CD8-positive, alpha-beta T cell (primary cell): ENCODE measurements at regions of chr3 and their contacts with region 1.

Region 1: DNA sequence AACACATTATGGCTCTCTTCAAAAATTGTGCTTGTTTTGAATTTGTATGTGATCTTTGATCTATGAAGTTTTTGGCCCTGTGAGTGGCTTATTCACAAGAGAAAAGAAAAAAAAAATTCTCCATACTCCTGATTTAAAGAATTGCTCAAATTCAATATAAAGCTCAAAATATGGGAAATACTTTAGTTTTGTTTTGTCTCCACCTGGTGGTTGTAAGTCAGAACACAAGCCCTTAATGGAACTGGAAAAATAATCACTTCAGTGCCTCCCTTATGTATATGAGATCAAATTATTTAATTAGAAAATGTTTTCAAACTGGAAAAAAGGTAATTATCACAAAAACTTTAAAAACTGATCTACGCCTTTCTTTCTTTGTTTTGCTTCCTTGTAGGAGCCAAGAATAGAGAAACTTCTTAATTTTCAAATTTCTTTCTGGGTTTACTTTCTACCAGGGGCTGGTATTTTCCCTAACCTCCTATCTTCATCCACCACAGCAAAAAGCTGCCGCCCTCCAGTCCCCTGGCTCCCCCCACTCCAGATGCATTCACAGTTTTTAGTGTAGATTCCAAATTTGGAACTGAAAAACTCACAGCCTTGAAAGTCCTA is 50.6 kb downstream of the SERP1 start:
- DNase-seq: peak in 3 of 9 experiments; percentile 23 to 70 (median 62)
- ATAC-seq: peak; percentile 52
- H3K4me3 ChIP-seq: no peak overlapping the region
- H3K4me3 Mint-ChIP-seq: no peak overlapping the region
- H3K27ac ChIP-seq: no peak overlapping the region
- H3K27ac Mint-ChIP-seq: no peak overlapping the region
- H3K4me1 ChIP-seq: no peaks in the 10 kb centered on the region
- H3K4me1 Mint-ChIP-seq: no peaks in the 10 kb centered on the region
- H3K27me3 ChIP-seq: no peaks in the 10 kb centered on the region
- H3K27me3 Mint-ChIP-seq: no peaks in the 10 kb centered on the region
- CTCF ChIP-seq: peak; percentile 81

Region 2: DNA sequence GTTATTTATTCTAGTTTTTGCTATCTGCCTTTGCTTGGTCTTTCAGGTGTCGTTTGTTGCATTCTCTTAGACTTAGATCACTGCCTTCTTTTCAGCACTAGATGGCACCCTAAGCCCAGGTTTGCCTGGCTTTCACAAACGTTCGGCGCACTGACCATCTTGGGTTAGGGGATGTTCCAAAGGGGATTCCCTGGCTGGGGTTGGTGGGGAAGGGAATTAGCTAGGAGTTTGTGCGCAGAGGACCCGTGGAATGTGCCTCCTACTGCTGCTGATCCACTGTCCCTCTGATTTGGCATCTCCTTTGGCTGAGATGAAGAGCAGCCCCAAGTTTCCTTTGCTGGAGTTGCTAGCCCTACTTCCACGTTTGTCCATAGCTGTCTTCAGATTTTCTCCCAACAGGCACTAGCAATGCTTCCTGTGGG is 558.8 kb before region 1 on chr3:
- CTCF ChIA-PET with region 1: no interaction called
- POLR2A ChIA-PET with region 1: no interaction called
- intact Hi-C with region 1: loop called (anchors 1 to 2 kb)
- DNase-seq: peak; percentile 7 to 64 (median 32)
- ATAC-seq: peak; percentile 46
- H3K4me3 ChIP-seq: no peak overlapping the region
- H3K4me3 Mint-ChIP-seq: no peak overlapping the region
- H3K27ac ChIP-seq: no peak overlapping the region
- H3K27ac Mint-ChIP-seq: no peak overlapping the region
- H3K4me1 ChIP-seq: no peaks in the 10 kb centered on the region
- H3K4me1 Mint-ChIP-seq: peaks cover 24% of the 10 kb centered on the region
- H3K27me3 ChIP-seq: no peaks in the 10 kb centered on the region
- H3K27me3 Mint-ChIP-seq: no peaks in the 10 kb centered on the region
- CTCF ChIP-seq: peak; percentile 65

Region 3: GRCh38 chr3:150220799-150221198 is 274.9 kb before region 1 on chr3:
- CTCF ChIA-PET with region 1: interaction called, 5 read pairs
- POLR2A ChIA-PET with region 1: no interaction called
- intact Hi-C with region 1: loop called (anchors 2 to 5 kb)
- DNase-seq: no peak
- ATAC-seq: no peak
- H3K4me3 ChIP-seq: no peak overlapping the region
- H3K4me3 Mint-ChIP-seq: no peak overlapping the region
- H3K27ac ChIP-seq: no peak overlapping the region
- H3K27ac Mint-ChIP-seq: no peak overlapping the region
- H3K4me1 ChIP-seq: peaks cover 5% of the 10 kb centered on the region
- H3K4me1 Mint-ChIP-seq: peaks cover 6% of the 10 kb centered on the region
- H3K27me3 ChIP-seq: peaks cover 5 to 10% of the 10 kb centered on the region in 2 experiments
- H3K27me3 Mint-ChIP-seq: peaks cover 45% of the 10 kb centered on the region
- CTCF ChIP-seq: no peak

Region 4: GRCh38 chr3:150286390-150287147 is 209.1 kb before region 1 on chr3:
- CTCF ChIA-PET with region 1: interaction called, 40 read pairs
- POLR2A ChIA-PET with region 1: interaction called, 3 read pairs
- intact Hi-C with region 1: loop called (anchors 1 kb)
- DNase-seq: peak in 4 of 9 experiments; percentile 8 to 68 (median 34)
- ATAC-seq: peak; percentile 83
- H3K4me3 ChIP-seq: no peak overlapping the region
- H3K4me3 Mint-ChIP-seq: no peak overlapping the region
- H3K27ac ChIP-seq: no peak overlapping the region
- H3K27ac Mint-ChIP-seq: no peak overlapping the region
- H3K4me1 ChIP-seq: no peaks in the 10 kb centered on the region
- H3K4me1 Mint-ChIP-seq: no peaks in the 10 kb centered on the region
- H3K27me3 ChIP-seq: peaks cover 2% of the 10 kb centered on the region in 2 experiments
- H3K27me3 Mint-ChIP-seq: peaks cover 13% of the 10 kb centered on the region
- CTCF ChIP-seq: peak; percentile 65

Region 5: GRCh38 chr3:150293401-150294061 is 202.1 kb before region 1 on chr3:
- CTCF ChIA-PET with region 1: interaction called, 16 read pairs
- POLR2A ChIA-PET with region 1: no interaction called
- intact Hi-C with region 1: no loop called
- DNase-seq: no peak
- ATAC-seq: no peak
- H3K4me3 ChIP-seq: no peak overlapping the region
- H3K4me3 Mint-ChIP-seq: no peak overlapping the region
- H3K27ac ChIP-seq: no peak overlapping the region
- H3K27ac Mint-ChIP-seq: no peak overlapping the region
- H3K4me1 ChIP-seq: no peaks in the 10 kb centered on the region
- H3K4me1 Mint-ChIP-seq: no peaks in the 10 kb centered on the region
- H3K27me3 ChIP-seq: peaks cover 0 to 3% of the 10 kb centered on the region in 2 experiments
- H3K27me3 Mint-ChIP-seq: peaks cover 22% of the 10 kb centered on the region
- CTCF ChIP-seq: no peak

Region 6: GRCh38 chr3:150384296-150385212 is 111.1 kb before region 1 on chr3:
- CTCF ChIA-PET with region 1: interaction called, 4 read pairs
- POLR2A ChIA-PET with region 1: no interaction called
- intact Hi-C with region 1: loop called in 1 of 2 experiments (anchors 1 kb)
- DNase-seq: peak; percentile 2 to 84 (median 37)
- ATAC-seq: peak; percentile 99
- H3K4me3 ChIP-seq: peak overlapping the region; percentile 29 to 36
- H3K4me3 Mint-ChIP-seq: peak overlapping the region; percentile 61
- H3K27ac ChIP-seq: no peak overlapping the region
- H3K27ac Mint-ChIP-seq: peak overlapping the region; percentile 69
- H3K4me1 ChIP-seq: peaks cover 18% of the 10 kb centered on the region
- H3K4me1 Mint-ChIP-seq: peaks cover 17% of the 10 kb centered on the region
- H3K27me3 ChIP-seq: no peaks in the 10 kb centered on the region
- H3K27me3 Mint-ChIP-seq: no peaks in the 10 kb centered on the region
- CTCF ChIP-seq: peak; percentile 65

Region 7: GRCh38 chr3:151971798-151972579 is 1476.3 kb after region 1 on chr3:
- CTCF ChIA-PET with region 1: no interaction called
- POLR2A ChIA-PET with region 1: no interaction called
- intact Hi-C with region 1: no loop called
- DNase-seq: no peak
- ATAC-seq: no peak
- H3K4me3 ChIP-seq: no peak overlapping the region
- H3K4me3 Mint-ChIP-seq: no peak overlapping the region
- H3K27ac ChIP-seq: no peak overlapping the region
- H3K27ac Mint-ChIP-seq: no peak overlapping the region
- H3K4me1 ChIP-seq: no peaks in the 10 kb centered on the region
- H3K4me1 Mint-ChIP-seq: peaks cover 4% of the 10 kb centered on the region
- H3K27me3 ChIP-seq: peaks cover 0 to under 1% of the 10 kb centered on the region in 2 experiments
- H3K27me3 Mint-ChIP-seq: no peaks in the 10 kb centered on the region
- CTCF ChIP-seq: no peak